RWPE1 (cell line): ENCODE measurements at regions of chr2 and their contacts with region 1.

Region 1: DNA sequence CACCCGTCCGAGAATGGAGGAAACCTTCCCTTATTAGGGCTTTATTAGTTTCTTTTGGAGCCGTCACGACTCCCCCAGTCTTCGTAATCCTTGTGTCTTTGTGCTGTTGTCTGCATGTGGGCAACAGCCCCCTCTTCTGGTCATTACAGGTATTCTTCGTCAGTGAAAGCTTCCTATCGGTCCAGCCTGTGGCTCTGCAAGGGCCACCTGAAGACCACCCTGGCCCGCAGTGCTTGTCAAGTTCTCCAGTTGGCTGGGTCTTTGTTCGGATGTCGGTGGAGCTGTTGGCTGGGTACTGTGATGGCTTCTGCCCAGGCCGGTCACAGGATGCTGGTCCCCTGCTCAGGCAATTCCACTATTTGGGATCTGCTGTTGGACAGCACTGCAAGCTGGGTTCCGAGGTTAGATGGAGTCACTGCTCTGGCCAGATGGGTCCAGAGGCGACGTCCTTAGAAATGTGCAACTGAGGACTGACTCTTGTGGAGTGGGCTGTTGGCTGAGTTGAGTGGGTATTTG is 19.2 kb downstream of the E2F6 start:
- DNase-seq: peak; percentile 44
- H3K27ac ChIP-seq: no peak overlapping the region
- CTCF ChIP-seq: peak; percentile 80

Region 2: DNA sequence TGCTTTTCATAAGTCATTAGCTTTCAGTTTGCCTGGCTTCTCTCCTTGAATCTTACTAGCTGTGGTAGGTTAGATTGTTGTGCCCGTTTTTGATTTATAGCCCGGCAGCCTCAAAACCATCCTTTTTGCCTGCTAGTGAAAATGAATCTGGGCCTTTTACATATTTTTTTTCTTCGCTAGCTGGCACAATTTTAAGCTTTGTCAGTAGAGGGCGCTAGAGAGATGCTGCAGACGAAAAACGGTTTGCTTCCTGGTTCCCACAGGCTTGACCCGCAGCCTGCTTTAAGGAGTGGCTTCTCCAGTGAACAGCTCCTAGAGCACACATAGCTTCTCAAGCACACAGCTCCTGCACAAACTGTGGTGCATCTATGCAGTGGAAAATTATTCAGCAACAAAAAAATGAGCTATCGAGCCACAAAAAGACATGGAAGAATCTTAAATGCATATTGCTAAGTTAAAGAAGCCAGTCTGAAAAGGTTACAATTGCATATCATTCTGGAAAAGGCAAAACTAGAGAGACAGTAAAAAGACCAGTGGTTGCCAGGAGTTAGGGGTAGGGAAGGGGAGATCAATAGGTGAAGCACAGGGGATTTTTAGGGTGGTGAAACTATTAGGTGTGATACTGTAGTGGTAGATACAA is 28.7 kb before region 1 on chr2:
- CTCF ChIA-PET with region 1: interaction called, 10 read pairs
- POLR2A ChIA-PET with region 1: no interaction called
- DNase-seq: no peak
- H3K27ac ChIP-seq: no peak overlapping the region
- CTCF ChIP-seq: peak; percentile 34

Region 3: DNA sequence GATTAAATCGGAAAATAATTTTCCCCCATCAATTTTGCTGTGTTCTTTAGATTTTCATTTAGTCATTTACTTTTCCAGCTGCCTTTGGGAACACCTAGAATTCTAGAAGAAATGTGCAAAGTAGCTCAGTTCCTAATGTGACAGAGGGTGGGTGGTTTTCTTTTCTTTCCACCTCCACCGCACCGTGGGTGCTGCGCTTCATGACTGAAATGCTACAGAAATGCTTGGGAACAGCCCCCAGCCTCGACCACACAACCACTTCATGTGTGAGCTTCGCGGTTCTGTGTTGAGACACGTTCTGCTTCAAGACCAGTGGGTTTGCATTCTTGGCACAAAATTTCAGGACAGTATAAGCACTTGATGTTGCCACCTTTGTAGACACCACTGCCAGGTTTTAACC is 11.8 kb before region 1 on chr2:
- CTCF ChIA-PET with region 1: interaction called, 14 read pairs
- POLR2A ChIA-PET with region 1: no interaction called
- DNase-seq: no peak
- H3K27ac ChIP-seq: no peak overlapping the region
- CTCF ChIP-seq: no peak

Region 4: DNA sequence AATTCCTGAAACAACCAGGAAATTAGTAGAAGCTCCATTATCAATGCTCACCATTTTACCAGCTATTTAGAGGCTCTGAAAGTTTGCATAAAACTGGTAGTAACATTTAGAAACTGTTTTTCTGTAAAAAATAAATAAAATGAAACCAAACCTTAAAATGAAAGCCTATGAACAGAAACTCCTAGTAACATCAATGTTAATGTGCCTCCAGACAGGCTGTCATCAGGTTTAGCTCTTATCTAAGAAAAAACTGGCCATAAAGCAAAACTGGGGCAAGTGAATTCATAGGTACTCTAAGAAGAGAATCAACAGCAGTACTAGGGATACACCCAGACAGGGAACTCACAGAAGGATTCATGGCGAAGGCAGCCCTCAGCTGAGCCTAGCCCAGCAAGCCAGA is 11.1 kb after region 1 on chr2:
- CTCF ChIA-PET with region 1: interaction called, 13 read pairs
- POLR2A ChIA-PET with region 1: no interaction called
- DNase-seq: no peak
- H3K27ac ChIP-seq: no peak overlapping the region
- CTCF ChIP-seq: no peak